OCI-LY7 (cell line): ENCODE measurements at regions of chr9 and their contacts with region 1.

Region 1: GRCh38 chr9:99819856-99820684 is 1.6 kb upstream of the NR4A3 start:
- DNase-seq: peak; percentile 95
- H3K4me3 ChIP-seq: peak overlapping the region; percentile 73
- H3K27ac ChIP-seq: peak overlapping the region; percentile 80
- H3K4me1 ChIP-seq: peaks cover 36% of the 10 kb centered on the region
- CTCF ChIP-seq: peak; percentile 45

Region 2: DNA sequence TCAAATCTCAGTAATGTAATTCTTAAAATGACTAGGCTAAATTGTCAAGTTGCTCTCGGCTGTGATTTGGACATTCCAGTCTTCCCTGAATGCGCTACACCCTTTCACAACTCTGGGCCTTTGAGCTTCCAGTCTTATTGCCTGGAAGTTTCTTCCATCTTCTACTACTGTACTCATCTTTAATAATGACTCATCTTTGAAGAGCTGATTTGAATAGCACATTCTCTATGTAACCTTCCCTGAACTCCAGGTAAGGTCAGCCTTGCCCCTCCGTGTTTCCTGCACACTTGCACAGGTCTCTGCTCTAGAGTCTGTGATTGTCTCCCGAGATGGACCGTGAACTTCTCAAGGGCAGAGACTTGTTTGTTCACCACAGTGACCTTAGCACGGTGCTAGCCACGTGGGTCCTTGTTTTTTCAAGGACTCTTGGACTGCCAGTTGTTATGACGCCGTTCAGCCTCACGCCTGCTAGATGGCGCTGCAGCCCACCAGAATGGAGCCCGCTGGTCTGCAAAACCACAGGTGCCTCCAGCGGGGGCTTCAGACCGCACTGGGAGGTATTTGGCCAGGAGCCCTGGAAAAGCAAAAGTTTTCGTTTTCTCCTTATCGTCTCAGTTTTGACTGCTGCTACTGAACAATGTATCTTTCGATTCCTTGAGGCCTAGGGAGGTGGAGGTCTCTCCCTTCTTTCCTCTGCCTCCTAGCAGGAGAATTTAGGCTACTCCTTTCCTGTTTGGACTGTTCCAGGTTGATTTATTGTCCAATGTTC is 553.6 kb before region 1 on chr9:
- CTCF ChIA-PET with region 1: no interaction called
- POLR2A ChIA-PET with region 1: no interaction called
- intact Hi-C with region 1: loop called (anchors 5 kb)
- DNase-seq: peak; percentile 77
- H3K4me3 ChIP-seq: no peak overlapping the region
- H3K27ac ChIP-seq: no peak overlapping the region
- H3K4me1 ChIP-seq: peaks cover 4% of the 10 kb centered on the region
- CTCF ChIP-seq: peak; percentile 94

Region 3: GRCh38 chr9:100098887-100099721 is 279.0 kb after region 1 on chr9 and contains the starts of genes ERP44 and INVS:
- CTCF ChIA-PET with region 1: no interaction called
- POLR2A ChIA-PET with region 1: interaction called, 3 read pairs
- intact Hi-C with region 1: loop called (anchors 5 kb)
- DNase-seq: peak; percentile 99
- H3K4me3 ChIP-seq: peak within 1 kb of the TSS; percentile 97
- H3K27ac ChIP-seq: peak within 1 kb of the TSS; percentile 71
- H3K4me1 ChIP-seq: peaks cover 34% of the 10 kb centered on the region
- CTCF ChIP-seq: no peak
- total RNA-seq, gene ERP44: 15.0 and 19.3 TPM in 2 replicates
- total RNA-seq, gene INVS: 30.7 and 33.1 TPM in 2 replicates

Region 4: GRCh38 chr9:100322954-100323536 is 503.0 kb after region 1 on chr9:
- CTCF ChIA-PET with region 1: no interaction called
- POLR2A ChIA-PET with region 1: no interaction called
- intact Hi-C with region 1: loop called (anchors 5 kb)
- DNase-seq: peak; percentile 55
- H3K4me3 ChIP-seq: no peak overlapping the region
- H3K27ac ChIP-seq: no peak overlapping the region
- H3K4me1 ChIP-seq: no peaks in the 10 kb centered on the region
- CTCF ChIP-seq: peak; percentile 89

Region 5: DNA sequence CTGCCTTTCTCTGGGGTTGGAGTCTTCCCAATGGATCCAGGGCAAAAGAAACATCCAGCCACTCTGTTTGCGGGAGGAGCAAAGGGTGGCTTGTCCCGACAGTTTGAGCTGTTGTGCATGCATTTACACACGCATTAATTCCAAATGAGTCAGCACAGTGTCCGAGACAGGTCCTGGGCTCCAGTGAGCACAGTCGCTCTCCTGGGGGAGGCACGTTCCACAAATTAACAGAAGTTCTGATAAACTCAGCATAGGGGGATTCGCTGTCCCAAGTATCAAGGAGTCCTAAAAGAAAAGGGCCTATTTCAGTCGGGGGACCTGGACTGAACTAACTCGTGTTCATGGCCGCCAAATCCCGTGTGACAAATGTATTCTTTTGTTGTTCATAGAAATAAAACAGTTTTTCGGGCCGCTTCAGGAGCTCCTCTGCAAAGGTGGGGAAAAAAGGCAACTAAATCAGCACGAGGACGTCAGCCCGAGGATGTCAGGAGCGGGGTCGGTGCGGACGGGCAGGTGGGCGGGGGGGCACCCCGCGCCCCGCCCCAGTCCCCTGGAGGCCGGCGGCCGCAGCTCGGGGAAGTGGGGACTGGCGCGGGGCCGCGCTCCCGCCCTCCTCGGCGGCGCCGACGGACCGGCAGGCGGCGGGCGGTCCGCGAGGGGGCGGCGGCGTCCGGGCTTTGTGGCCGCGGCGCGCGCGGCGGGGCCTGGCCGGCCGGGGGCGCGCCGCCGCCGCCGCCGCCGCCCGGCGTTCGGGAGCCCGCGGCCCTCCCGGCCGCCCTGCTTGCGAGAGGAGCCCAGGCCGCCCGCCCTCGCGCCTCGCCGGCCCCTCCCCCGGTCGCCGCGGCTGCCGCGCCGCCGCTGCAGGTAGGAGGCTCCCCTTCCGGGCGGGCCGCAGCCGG is 606.7 kb after region 1 on chr9 and contains the start of gene MSANTD3:
- CTCF ChIA-PET with region 1: no interaction called
- POLR2A ChIA-PET with region 1: no interaction called
- intact Hi-C with region 1: loop called (anchors 5 kb)
- DNase-seq: peak; percentile 81
- H3K4me3 ChIP-seq: peak within 1 kb of the TSS; percentile 91
- H3K27ac ChIP-seq: peak within 1 kb of the TSS; percentile 59
- H3K4me1 ChIP-seq: peaks cover 20% of the 10 kb centered on the region
- CTCF ChIP-seq: no peak
- total RNA-seq, gene MSANTD3: 38.0 and 51.7 TPM in 2 replicates